ENCODE measurements at regions of chr2 and their contacts with region 1.

Region 1: DNA sequence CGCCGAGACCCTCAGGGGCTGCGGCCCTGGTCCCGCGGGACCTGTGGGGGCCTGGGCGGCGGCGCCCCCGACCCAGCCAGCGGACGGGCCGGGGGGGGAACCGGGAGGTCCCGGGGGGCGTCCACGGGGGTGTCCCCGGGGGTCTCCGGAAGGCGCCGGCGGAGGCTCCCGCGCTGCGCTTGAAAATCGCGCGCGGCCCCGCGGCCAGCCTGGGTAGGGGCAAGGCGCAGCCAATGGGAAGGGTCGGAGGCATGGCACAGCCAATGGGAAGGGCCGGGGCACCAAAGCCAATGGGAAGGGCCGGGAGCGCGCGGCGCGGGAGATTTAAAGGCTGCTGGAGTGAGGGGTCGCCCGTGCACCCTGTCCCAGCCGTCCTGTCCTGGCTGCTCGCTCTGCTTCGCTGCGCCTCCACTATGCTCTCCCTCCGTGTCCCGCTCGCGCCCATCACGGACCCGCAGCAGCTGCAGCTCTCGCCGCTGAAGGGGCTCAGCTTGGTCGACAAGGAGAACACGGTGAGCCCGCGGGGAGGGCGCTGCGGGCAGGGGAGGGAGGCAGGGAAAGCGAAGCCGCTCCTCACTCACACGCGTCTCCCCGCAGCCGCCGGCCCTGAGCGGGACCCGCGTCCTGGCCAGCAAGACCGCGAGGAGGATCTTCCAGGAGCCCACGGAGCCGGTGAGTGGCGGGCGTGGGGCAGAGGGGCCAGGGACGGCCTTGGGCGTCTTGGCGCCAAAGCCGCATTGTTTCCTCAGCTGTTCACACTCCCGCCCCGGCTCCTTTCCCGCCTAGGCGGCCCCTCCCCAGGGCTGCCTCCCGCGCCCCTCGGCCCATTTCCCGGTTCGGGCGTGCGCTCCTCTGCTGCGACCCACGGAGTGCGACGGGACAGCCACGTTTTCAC is at the start of gene RRM2:
- DNase-seq: peak; percentile 75
- H3K4me3 ChIP-seq: peak within 1 kb of the TSS; percentile 70
- CTCF ChIP-seq: no peak

Region 2: GRCh38 chr2:10434886-10435819 is 312.5 kb after region 1 on chr2:
- in situ Hi-C with region 1: loop called (anchors 5 kb)
- DNase-seq: no peak
- H3K4me3 ChIP-seq: no peak overlapping the region
- CTCF ChIP-seq: peak; percentile 96

Region 3: DNA sequence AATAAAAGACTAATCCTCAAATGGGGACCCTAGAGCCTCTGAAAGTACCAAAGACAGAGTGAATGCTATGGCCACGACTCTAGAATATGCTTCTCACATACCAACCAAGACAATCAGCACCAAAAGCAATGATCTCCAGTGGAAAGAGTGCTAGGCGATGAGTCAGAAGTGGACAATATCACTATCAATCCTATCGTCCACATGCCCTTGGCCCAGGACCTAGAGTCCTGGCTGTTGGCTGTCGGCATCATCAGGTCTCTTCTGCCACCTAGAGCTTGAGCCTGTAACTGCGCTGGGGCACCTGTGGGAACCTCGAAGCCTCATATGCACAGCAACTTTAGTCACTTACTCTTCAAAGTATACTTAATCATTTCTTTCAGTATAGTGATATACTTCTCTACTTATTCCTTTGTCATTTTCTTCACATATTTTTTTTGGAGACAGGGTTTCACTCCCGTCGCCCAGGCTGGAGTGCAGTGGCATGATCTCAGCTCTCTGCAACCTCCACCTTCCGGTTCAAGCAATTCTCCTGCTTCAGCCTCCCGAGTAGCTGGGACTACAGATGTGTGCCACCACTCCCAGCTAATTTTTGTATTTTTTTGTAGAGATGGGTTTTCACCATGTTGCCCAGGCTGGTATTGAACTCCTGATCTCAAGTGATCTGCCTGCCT is 537.4 kb after region 1 on chr2:
- in situ Hi-C with region 1: loop called (anchors 10 kb)
- DNase-seq: peak; percentile 62
- H3K4me3 ChIP-seq: no peak overlapping the region
- CTCF ChIP-seq: peak; percentile 93

Measured in astrocyte of the cerebellum (primary cell).